ENCODE measurements at regions of chr4 and their contacts with region 1.

Region 1: DNA sequence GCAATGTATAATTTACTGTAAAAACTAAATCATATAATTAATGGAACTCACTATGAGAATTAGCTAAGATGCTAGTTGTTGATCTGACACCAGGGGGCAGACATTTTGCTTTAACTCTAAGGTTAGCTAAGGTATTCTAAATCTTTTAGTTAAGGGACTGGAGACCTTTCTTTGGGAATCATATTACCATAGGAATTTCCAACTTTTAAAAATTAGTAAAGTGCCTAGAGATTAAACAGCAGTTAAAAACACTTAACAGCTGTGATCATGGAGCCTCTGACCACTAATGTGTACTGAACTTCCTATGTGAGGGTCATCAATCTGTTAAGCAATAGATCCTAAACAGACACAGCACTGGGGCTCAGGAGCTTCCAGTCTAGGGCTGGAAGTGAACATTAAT is 226.6 kb downstream of the NSUN7 start:
- DNase-seq: no peak
- H3K4me3 ChIP-seq: no peak overlapping the region
- H3K27ac ChIP-seq: no peak overlapping the region
- H3K4me1 ChIP-seq: peaks cover 0 to 13% (median 2%) of the 10 kb centered on the region in 4 donors
- H3K27me3 ChIP-seq: no peaks in the 10 kb centered on the region
- CTCF ChIP-seq: peak; percentile 25 to 73 (median 58)
- EP300 ChIP-seq: no peak
- POLR2A ChIP-seq: no peak

Region 2: GRCh38 chr4:40486534-40486933 is 489.8 kb before region 1 on chr4:
- intact Hi-C with region 1: no loop called
- DNase-seq: no peak
- H3K4me3 ChIP-seq: no peak overlapping the region
- H3K27ac ChIP-seq: no peak overlapping the region
- H3K4me1 ChIP-seq: no peaks in the 10 kb centered on the region
- H3K27me3 ChIP-seq: no peaks in the 10 kb centered on the region
- CTCF ChIP-seq: no peak
- EP300 ChIP-seq: no peak
- POLR2A ChIP-seq: no peak

Region 3: DNA sequence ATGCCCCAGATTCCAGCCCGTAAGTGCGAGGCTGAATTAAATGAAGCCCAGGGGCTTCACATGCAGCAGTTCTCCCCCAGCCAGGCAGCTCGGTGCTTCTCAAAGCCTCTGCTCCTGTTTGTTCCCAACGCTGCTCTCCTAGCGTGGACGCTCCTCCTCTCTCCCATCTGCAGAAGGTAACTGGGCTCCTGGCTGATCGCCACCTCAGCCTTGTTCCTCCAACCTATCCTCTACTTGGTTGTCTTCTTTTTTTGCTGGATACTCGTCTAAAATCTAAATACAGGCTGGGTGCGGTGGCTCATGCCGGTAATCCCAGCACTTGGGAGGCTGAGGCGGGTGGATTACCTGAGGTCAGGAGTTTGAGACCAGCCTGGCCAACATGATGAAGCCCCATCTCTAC is 156.2 kb before region 1 on chr4:
- intact Hi-C with region 1: no loop called
- DNase-seq: no peak
- H3K4me3 ChIP-seq: no peak overlapping the region
- H3K27ac ChIP-seq: no peak overlapping the region
- H3K4me1 ChIP-seq: no peaks in the 10 kb centered on the region
- H3K27me3 ChIP-seq: no peaks in the 10 kb centered on the region
- CTCF ChIP-seq: no peak
- EP300 ChIP-seq: no peak
- POLR2A ChIP-seq: no peak

Region 4: DNA sequence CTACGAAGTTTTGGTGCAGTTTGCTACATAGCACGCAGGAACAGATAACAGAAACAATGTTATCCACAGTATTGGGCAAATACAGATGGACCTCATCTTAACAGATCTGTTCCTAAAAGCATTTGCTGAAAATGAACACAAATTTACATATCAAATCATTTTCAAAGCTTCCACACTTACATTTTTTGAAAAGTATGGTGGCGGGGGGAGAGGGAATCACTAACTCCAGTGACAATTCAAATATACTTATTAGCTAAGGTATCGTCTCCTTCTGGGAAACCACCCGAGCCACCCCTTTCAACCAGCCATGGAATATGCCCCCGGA is 51.6 kb before region 1 on chr4:
- intact Hi-C with region 1: loop called (anchors 5 kb)
- DNase-seq: no peak
- H3K4me3 ChIP-seq: no peak overlapping the region
- H3K27ac ChIP-seq: no peak overlapping the region
- H3K4me1 ChIP-seq: no peaks in the 10 kb centered on the region
- H3K27me3 ChIP-seq: no peaks in the 10 kb centered on the region
- CTCF ChIP-seq: no peak
- EP300 ChIP-seq: no peak
- POLR2A ChIP-seq: no peak

Region 5: DNA sequence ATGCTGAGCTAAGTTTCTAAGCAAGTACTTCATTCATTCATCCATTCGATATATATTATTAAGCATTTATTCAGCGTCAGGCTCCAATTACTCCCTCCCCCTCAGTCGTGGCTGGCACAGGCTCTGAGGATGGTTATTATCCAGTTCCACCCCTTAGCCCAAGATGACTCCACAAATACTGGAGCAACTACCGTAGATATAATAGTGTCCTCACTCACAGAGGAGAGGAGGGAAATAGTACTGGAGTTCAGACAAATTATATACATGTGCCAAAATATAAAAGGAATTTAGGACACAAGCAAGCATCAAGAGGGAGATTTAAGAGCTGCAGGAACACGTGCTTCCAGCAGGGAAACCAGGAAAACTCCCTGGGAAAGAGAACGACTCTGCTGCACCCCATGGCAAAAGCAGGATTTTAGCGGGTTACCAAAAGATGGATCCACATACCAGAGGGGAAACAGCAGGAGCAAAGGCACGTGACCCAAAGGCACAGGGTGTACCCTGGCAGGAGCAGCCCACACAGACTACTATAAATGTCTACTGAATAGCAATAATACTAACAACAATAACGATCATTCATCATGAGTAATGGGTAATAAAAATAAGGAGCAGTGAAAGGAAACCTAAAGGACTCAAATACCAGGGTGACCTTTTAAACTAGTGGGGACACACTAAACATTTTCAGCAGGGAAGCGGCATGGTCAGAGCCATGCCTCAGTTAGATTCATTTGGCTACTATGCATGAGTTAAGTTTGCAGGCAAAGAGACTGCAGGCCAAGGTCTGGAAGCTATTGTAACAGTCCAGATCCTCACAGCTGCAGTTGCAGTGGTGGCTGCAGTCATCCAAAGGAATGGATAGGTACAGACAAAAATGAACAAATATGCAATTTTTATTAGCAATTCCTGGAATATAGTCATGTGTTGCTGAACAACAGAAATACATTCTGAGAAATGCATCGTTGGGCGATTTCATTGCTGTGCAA is 84.3 kb after region 1 on chr4:
- intact Hi-C with region 1: loop called (anchors 5 kb)
- DNase-seq: peak; percentile 89
- H3K4me3 ChIP-seq: peak overlapping the region in 1 of 4 donors; percentile 3
- H3K27ac ChIP-seq: peak overlapping the region in 3 of 4 donors; percentile 70 to 81 (median 77)
- H3K4me1 ChIP-seq: peaks cover 0 to 77% (median 63%) of the 10 kb centered on the region in 4 donors
- H3K27me3 ChIP-seq: no peaks in the 10 kb centered on the region
- CTCF ChIP-seq: no peak
- EP300 ChIP-seq: peak; percentile 79 to 98 (median 92)
- POLR2A ChIP-seq: no peak